ENCODE measurements at regions of chr17 and their contacts with region 1.

Region 1: DNA sequence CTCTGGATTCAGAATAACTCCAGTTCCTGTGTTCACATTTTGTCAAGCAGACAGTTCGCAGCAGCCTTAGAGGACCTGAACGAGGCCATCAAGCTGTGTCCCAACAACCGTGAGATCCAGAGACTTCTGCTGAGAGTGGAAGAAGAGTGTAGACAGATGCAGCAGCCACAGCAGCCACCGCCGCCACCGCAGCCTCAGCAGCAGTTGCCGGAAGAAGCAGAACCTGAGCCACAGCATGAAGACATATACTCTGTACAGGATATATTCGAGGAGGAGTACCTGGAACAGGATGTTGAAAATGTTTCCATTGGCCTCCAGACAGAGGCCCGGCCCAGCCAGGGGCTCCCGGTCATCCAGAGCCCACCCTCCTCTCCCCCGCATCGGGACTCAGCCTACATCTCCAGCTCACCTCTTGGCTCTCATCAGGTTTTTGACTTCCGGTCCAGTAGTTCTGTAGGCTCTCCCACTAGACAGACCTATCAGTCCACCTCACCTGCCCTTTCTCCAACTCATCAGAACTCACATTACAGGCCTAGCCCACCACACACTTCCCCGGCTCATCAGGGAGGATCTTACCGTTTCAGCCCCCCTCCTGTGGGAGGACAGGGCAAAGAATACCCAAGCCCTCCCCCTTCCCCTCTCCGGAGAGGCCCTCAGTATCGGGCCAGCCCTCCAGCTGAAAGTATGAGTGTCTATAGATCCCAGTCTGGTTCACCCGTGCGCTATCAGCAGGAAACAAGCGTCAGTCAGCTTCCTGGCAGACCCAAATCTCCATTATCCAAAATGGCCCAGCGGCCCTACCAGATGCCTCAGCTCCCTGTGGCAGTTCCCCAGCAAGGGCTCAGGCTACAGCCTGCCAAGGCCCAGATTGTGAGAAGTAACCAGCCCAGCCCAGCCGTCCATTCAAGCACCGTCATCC is 25.9 kb downstream of the CYB561 start:
- DNase-seq: no peak
- H3K4me3 ChIP-seq: no peak overlapping the region
- H3K4me1 ChIP-seq: no peaks in the 10 kb centered on the region
- H3K27me3 ChIP-seq: no peaks in the 10 kb centered on the region

Region 2: DNA sequence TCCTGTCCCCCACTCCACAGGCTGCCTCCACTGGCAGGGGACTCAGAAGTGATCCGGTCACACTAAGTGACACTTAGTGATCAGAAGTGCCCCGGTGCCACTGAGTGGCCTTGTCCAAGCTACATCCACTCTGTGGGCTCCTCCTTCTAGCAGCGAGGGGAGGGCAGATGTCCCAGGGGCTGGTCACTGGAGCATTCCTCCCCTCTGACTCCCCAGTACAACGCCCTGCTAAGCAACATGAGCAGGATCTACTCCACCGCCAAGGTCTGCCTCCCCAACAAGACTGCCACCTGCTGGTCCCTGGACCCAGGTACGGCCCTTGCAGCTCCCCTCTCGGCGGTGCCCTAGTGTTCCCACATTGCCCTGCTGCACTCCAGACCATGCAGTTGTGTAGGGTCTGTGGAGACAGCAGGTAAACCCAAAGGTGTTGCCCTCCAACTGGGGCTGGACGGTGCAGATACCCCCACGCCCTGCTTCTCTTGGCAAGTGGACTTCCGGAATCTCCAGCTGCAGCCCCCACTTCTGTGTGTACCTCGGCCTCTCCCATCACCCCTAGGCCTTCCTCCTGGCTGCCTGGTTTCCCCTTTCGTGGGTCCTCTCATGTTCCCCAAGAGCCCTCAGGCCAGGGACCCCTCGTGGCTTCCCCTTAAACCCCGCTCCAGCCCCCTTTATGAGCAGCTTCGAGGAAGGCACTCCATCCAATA is 58.7 kb after region 1 on chr17:
- in situ Hi-C with region 1: loop called (anchors 5 kb)
- DNase-seq: peak; percentile 84 to 92
- H3K4me3 ChIP-seq: no peak overlapping the region
- H3K4me1 ChIP-seq: peaks cover 15% of the 10 kb centered on the region
- H3K27me3 ChIP-seq: no peaks in the 10 kb centered on the region

Region 3: DNA sequence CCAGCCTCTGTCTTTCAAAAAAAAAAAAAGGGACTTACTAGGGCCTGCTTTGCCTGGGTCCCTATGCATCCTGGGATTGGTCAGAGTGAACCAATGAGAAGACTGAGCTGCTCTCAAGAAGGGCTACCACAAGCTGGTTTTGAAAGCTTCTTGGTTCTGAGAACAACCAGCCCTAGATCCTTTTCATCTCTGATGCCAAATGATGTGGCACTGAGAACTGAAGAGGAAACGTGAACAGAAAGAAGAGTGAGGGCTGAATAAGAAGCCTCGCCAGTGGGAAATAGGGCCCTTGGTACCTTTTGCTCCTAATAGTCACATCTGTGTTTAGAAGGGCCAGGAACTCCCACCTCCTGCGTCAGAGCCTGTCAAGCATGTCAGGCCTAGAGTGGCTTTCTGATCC is 191.1 kb after region 1 on chr17:
- in situ Hi-C with region 1: loop called (anchors 5 kb)
- DNase-seq: no peak
- H3K4me3 ChIP-seq: no peak overlapping the region
- H3K4me1 ChIP-seq: no peaks in the 10 kb centered on the region
- H3K27me3 ChIP-seq: no peaks in the 10 kb centered on the region

Region 4: DNA sequence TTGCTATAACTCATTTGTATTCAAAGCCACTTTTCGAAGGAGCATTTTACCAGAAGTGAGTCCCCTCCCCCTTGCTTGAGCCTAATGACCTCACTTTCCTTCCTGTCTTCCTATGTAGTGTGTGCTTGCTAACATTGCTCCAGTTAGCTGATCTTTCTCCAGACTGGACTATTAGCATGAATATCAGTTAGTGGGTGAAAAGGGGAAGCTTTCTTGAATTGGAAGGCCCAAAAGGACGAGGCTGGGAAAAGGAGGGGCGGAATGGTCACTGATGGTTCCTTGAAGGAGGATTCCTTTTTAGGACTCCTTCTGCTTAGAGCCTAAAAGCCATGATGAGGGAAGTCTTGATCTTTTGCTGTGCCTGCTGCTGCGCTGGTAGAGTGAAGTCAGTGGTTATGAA is 214.0 kb after region 1 on chr17:
- in situ Hi-C with region 1: no loop called
- DNase-seq: no peak
- H3K4me3 ChIP-seq: no peak overlapping the region
- H3K4me1 ChIP-seq: peaks cover 15% of the 10 kb centered on the region
- H3K27me3 ChIP-seq: no peaks in the 10 kb centered on the region

Measured in HAP-1 (cell line).